Aorta (tissue), 5 donors: ENCODE measurements at regions of chr20 and their contacts with region 1.

Region 1: DNA sequence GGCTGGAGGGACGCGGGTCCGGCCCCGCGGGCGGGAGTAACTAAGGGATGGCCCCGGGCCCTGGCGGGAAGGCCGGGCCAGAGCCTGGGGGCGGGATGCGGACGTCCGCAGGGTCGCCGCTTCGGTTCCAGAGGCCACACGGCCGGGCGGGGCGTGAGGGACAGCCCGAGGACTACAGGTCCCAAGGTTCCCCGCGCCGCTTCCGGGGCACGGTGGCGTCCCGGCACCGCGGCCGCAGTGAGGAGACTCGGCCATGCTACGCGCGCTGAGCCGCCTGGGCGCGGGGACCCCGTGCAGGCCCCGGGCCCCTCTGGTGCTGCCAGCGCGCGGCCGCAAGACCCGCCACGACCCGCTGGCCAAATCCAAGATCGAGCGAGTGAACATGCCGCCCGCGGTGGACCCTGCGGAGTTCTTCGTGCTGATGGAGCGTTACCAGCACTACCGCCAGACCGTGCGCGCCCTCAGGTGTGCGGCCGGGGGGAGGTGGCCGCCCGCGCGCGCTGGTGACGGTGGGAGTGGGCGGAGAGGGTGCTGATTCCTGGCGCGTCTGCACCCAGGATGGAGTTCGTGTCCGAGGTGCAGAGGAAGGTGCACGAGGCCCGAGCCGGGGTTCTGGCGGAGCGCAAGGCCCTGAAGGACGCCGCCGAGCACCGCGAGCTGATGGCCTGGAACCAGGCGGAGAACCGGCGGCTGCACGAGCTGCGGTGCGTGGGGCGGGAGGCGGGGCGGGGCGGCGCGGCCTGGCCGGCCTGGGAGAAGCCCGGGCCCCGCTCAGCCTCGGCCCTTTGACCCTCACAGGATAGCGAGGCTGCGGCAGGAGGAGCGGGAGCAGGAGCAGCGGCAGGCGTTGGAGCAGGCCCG is at the start of gene MRPS26:
- DNase-seq: peak; percentile 95 to 97
- ATAC-seq: peak; percentile 92
- H3K4me3 ChIP-seq: peak within 1 kb of the TSS; percentile 67 to 81
- H3K27ac ChIP-seq: peak within 1 kb of the TSS; percentile 23 to 91
- H3K4me1 ChIP-seq: no peaks in the 10 kb centered on the region
- H3K27me3 ChIP-seq: no peaks in the 10 kb centered on the region
- total RNA-seq, gene MRPS26: 19.6 to 23.5 TPM

Region 2: GRCh38 chr20:2829376-2829775 is 216.7 kb before region 1 on chr20:
- intact Hi-C with region 1: no loop called
- DNase-seq: no peak
- ATAC-seq: no peak
- H3K4me3 ChIP-seq: no peak overlapping the region
- H3K27ac ChIP-seq: no peak overlapping the region
- H3K4me1 ChIP-seq: no peaks in the 10 kb centered on the region
- H3K27me3 ChIP-seq: no peaks in the 10 kb centered on the region

Region 3: DNA sequence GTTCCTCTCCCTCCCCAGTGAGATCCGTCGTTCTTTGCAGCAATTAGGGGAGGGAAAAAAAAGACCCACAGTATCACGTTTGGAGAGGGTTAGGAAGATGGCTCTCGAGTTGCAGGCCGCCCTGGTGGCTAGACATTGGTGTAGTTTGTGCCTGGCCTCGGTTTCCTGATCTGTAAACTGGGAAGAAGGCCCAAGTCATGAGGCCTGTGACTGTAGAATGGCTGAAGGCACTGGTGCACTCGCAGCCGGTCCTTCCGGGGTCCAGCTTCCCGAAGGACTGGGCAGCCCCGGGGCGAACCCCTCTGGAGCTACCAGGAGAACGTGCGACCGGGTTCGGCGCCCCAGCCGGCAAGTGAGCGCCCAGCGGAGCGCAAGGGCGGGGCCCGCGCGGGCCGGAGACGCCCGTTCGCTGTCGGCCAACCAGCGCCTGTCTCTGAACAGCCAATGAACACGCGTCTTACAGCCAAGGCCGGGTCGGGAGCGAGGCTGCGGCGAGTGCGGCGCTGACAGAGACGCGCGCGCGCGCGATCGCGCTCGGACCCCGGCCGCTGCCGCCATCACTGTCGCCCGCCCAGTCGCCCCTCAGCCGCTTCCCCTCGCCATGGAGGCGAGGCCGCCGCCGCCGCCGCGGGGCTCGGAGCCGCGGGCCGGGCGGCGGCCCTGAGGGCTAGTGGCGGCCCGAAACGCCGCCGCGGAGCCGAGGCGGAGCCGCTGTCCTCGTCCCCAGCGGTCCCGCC is 172.9 kb before region 1 on chr20 and contains the start of gene PTPRA:
- intact Hi-C with region 1: loop called in 1 of 2 experiments (anchors 10 kb)
- DNase-seq: peak; percentile 96 to 98
- ATAC-seq: peak; percentile 96
- H3K4me3 ChIP-seq: peak within 1 kb of the TSS; percentile 78 to 99
- H3K27ac ChIP-seq: no peak within 1 kb of the TSS
- H3K4me1 ChIP-seq: no peaks in the 10 kb centered on the region
- H3K27me3 ChIP-seq: no peaks in the 10 kb centered on the region
- total RNA-seq, gene PTPRA: 60.2 to 69.7 TPM

Region 4: GRCh38 chr20:3204124-3204822 is 158.2 kb after region 1 on chr20 and contains the start of gene DDRGK1:
- intact Hi-C with region 1: loop called in 1 of 2 experiments (anchors 10 kb)
- DNase-seq: peak; percentile 90 to 96
- ATAC-seq: peak; percentile 95
- H3K4me3 ChIP-seq: peak within 1 kb of the TSS; percentile 59 to 75
- H3K27ac ChIP-seq: peak within 1 kb of the TSS in 1 of 2 donors; percentile 77
- H3K4me1 ChIP-seq: no peaks in the 10 kb centered on the region
- H3K27me3 ChIP-seq: no peaks in the 10 kb centered on the region
- total RNA-seq, gene DDRGK1: 40.5 to 49.5 TPM